Activated CD4-positive, alpha-beta memory T cell treated with anti-CD3 and anti-CD28 coated beads for 36 hours (primary cell): ENCODE measurements at regions of chr10 and their contacts with region 1.

Region 1: GRCh38 chr10:73358331-73359279 is at the start of gene CFAP70:
- DNase-seq: peak; percentile 96
- H3K4me3 Mint-ChIP-seq: peak within 1 kb of the TSS; percentile 95
- H3K27ac Mint-ChIP-seq: peak within 1 kb of the TSS; percentile 79
- H3K4me1 Mint-ChIP-seq: peaks cover 14% of the 10 kb centered on the region
- H3K27me3 Mint-ChIP-seq: no peaks in the 10 kb centered on the region
- total RNA-seq, gene CFAP70: 0.33 to 0.80 TPM

Region 2: DNA sequence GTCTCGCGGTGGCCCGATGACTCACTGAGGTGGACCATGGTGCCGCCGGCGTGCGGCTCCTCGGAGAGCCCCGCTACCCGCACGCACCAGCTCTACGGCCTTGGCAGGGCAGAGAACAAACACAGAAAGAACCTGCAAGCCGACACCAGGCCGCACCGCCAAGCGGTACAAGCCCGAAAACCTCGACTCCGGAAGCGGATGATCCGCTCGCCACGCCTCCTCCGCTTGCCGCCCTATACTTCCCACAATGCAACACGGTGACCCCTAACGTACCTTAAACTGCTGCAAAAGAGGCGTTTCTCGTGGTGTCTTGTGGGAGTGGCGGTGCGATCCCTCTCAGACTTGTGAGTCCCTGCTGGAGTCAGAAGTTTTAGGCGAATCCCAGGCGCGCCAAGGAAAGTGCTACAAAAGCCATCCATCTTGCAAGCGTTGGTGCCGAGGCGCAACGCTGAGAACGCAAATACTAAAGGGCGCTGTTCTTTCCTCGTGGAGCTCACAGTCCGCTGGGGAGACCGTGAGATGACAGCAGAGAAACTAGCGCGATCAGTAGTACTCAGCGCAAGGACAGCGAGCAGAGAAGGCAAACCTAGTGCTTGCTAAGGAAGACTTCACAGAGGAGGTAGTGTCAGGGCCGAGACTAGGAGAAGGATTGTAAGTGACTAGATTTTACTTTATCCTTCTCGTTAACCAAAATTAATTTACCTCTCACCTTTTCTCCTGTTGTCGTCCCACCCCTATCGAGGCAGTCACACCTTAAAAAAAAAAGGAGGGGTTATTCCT is 106.0 kb before region 1 on chr10 and contains the start of gene MRPS16:
- CTCF ChIA-PET with region 1: no interaction called
- POLR2A ChIA-PET with region 1: interaction called, 9 read pairs
- intact Hi-C with region 1: loop called (anchors 2 kb)
- DNase-seq: peak; percentile 96
- H3K4me3 Mint-ChIP-seq: peak within 1 kb of the TSS; percentile 97
- H3K27ac Mint-ChIP-seq: peak within 1 kb of the TSS; percentile 98
- H3K4me1 Mint-ChIP-seq: peaks cover 38% of the 10 kb centered on the region
- H3K27me3 Mint-ChIP-seq: no peaks in the 10 kb centered on the region
- total RNA-seq, gene MRPS16: 136 to 139 TPM

Region 3: DNA sequence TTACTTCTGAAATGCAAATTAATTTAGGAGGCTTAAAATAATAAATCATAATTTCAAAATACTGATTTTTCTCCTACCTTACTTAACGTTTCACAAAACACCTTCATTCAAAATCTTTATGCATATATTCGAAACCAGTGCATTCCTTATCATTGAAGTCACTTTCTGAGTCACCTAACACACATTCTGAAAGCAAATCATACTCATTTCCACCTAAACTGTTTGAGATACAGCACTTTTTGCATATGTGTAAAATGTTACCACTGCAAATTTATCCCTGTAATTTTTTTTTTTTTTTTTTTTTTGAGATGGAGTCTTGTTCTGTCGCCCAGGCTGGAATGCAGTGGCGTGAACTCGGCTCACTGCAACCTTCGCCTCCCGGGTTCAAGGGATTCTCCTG is 121.6 kb after region 1 on chr10:
- CTCF ChIA-PET with region 1: no interaction called
- POLR2A ChIA-PET with region 1: no interaction called
- intact Hi-C with region 1: loop called (anchors 10 kb)
- DNase-seq: no peak
- H3K4me3 Mint-ChIP-seq: peak overlapping the region; percentile 20
- H3K27ac Mint-ChIP-seq: no peak overlapping the region
- H3K4me1 Mint-ChIP-seq: peaks cover 31% of the 10 kb centered on the region
- H3K27me3 Mint-ChIP-seq: no peaks in the 10 kb centered on the region